Right ventricle myocardium inferior (tissue), 1 donor: ENCODE measurements at regions of chr1 and their contacts with region 1.

Region 1: DNA sequence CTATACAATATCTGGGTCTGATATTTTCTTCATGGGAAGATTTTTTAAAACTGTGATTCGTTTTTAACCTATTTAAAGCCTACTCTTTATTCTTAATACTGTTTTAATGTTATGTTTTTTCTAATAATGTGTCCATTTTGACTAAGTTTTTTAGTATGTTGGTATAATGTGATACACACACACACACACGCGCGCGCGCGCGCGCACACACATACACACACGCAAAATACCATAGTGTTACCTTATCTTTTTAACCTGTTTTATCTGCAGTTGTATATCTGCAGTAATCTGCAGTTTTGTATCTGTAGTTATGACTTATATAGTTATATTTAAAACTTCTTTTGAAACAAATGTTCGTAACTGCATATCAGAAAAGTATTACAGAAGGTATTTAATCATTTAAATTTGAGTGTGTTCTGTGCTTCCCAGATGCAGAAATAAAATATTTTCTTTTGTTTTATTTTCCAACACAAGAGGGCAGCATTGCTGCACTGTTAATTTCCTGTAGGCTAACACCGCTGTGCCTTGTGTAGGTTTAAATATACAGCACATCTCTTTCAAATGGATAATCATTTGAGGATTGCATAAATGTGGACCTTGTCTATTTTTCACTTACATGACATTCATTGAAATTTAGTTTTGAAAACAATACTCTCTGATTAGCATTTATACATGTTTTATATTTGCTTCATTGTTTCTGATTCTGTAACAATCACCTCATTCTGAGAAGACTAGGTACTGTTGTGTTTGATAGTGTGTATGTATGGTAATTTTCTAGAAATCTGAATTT is 166.1 kb downstream of the PDE4B start:
- DNase-seq: no peak
- ATAC-seq: no peak

Region 2: GRCh38 chr1:66000033-66000637 is 41.4 kb after region 1 on chr1:
- intact Hi-C with region 1: no loop called
- DNase-seq: no peak
- ATAC-seq: no peak

Region 3: DNA sequence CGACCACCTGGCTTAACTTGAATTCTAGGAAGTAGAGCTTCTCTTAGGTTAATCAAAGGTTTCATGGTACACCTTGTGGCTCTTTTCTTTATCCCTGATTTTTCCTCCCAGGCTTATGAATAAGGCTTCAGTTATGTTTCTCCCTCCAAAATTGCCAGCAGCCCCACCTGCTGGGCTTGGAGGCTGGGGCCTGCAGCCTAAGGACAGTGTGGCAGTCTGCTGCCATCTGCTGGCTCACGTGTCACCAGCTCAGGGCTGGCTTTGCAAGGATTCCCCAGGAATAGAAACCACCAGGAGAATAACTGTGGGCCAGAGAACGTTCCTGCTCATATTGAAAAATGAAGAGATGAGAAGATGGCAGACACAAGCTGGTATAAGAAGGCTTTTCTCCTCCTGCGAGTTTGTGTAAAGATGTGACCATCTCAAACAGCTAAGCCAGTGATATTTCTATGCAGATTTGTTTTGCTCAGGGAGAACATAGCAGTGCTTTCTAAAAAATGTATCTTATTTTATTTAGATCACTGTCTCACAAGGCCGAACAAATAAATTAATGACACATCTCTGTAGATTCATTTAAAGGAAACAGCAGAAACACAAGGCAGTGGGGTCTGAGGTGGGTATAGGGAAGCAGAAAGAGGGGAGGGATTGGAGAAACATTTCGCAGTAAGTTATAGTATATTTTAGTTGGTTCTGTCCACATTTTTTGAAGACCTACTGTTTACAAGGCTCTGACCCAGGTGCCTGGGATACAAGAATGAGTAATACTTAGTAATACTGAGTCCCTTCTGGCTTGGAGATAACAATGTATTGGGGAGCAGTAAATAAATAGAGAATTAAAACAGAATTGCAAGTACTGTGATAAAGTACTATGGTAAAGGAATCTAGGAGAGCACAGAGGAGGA is 284.1 kb after region 1 on chr1:
- intact Hi-C with region 1: loop called (anchors 2 kb)
- DNase-seq: peak; percentile 90
- ATAC-seq: peak; percentile 97